ENCODE measurements at regions of chr1 and their contacts with region 1.

Region 1: GRCh38 chr1:187734427-187734826 is 905.7 kb downstream of the PLA2G4A start:
- DNase-seq: no peak
- ATAC-seq: no peak
- H3K4me3 ChIP-seq: no peak overlapping the region
- H3K27ac ChIP-seq: no peak overlapping the region
- H3K4me1 ChIP-seq: no peaks in the 10 kb centered on the region
- H3K27me3 ChIP-seq: no peaks in the 10 kb centered on the region
- CTCF ChIP-seq: no peak
- POLR2A ChIP-seq: no peak

Region 2: GRCh38 chr1:187617776-187618175 is 116.7 kb before region 1 on chr1:
- intact Hi-C with region 1: no loop called
- DNase-seq: no peak
- ATAC-seq: no peak
- H3K4me3 ChIP-seq: no peak overlapping the region
- H3K27ac ChIP-seq: no peak overlapping the region
- H3K4me1 ChIP-seq: no peaks in the 10 kb centered on the region
- H3K27me3 ChIP-seq: no peaks in the 10 kb centered on the region
- CTCF ChIP-seq: no peak
- POLR2A ChIP-seq: no peak

Region 3: GRCh38 chr1:187715483-187715882 is 18.9 kb before region 1 on chr1:
- intact Hi-C with region 1: loop called in 1 of 10 experiments (anchors 2 kb)
- DNase-seq: no peak
- ATAC-seq: no peak
- H3K4me3 ChIP-seq: no peak overlapping the region
- H3K27ac ChIP-seq: no peak overlapping the region
- H3K4me1 ChIP-seq: no peaks in the 10 kb centered on the region
- H3K27me3 ChIP-seq: no peaks in the 10 kb centered on the region
- CTCF ChIP-seq: no peak
- POLR2A ChIP-seq: no peak

Region 4: GRCh38 chr1:187787736-187788135 is 53.3 kb after region 1 on chr1:
- intact Hi-C with region 1: loop called in 1 of 10 experiments (anchors 2 kb)
- DNase-seq: no peak
- ATAC-seq: no peak
- H3K4me3 ChIP-seq: no peak overlapping the region
- H3K27ac ChIP-seq: no peak overlapping the region
- H3K4me1 ChIP-seq: no peaks in the 10 kb centered on the region
- H3K27me3 ChIP-seq: no peaks in the 10 kb centered on the region
- CTCF ChIP-seq: no peak
- POLR2A ChIP-seq: no peak